Sciatic nerve (tissue), 2 donors: ENCODE measurements at regions of chr19 and their contacts with region 1.

Region 1: GRCh38 chr19:15154002-15154612 is 46.7 kb downstream of the NOTCH3 start:
- DNase-seq: no peak
- ATAC-seq: no peak

Region 2: GRCh38 chr19:15091901-15092753 is 62.0 kb before region 1 on chr19:
- intact Hi-C with region 1: loop called (anchors 5 kb)
- DNase-seq: no peak
- ATAC-seq: peak; percentile 66